ENCODE measurements at regions of chr16 and their contacts with region 1.

Region 1: DNA sequence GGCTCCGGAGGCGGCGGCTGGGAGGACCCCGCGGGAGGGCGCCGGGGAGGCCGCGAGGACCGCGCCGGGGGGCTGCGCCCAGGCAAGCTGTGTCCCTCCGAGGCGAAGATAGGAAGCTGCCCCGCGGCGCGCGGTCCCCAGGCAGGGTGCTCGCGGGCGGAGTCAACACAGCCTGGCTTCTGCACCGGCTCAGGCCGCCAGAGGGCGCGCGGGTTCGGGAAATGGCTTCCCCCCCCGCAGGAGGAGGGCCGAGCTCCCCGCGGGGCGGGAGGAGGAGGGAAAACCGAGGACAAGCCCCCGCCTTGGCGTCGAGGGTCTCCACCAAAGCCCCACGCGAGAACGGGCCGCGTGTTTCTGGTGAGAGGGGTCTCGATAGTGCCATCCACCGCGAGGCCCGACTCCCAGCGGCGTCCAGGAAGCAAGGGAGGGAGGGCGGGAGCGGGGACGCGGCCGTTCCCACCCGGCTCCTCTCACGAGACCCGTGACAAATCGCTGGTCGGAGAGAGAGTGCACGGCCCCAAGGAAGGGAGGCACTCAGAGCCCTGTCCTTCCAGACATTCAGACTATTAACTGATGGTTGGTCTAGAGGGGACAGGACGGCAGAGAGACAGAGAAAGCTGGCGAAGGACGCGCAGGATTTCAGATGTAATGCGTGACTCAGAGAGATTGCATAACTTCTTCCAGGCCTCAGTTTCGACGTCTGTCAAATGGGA is 64.4 kb upstream of the DNAJA2 start:
- DNase-seq: peak; percentile 91
- ATAC-seq: peak; percentile 97
- H3K4me3 Mint-ChIP-seq: peak overlapping the region; percentile 69
- H3K27ac Mint-ChIP-seq: no peak overlapping the region
- H3K4me1 Mint-ChIP-seq: peaks cover 3% of the 10 kb centered on the region
- H3K27me3 Mint-ChIP-seq: peaks cover 7% of the 10 kb centered on the region
- CTCF ChIP-seq: peak; percentile 96

Region 2: DNA sequence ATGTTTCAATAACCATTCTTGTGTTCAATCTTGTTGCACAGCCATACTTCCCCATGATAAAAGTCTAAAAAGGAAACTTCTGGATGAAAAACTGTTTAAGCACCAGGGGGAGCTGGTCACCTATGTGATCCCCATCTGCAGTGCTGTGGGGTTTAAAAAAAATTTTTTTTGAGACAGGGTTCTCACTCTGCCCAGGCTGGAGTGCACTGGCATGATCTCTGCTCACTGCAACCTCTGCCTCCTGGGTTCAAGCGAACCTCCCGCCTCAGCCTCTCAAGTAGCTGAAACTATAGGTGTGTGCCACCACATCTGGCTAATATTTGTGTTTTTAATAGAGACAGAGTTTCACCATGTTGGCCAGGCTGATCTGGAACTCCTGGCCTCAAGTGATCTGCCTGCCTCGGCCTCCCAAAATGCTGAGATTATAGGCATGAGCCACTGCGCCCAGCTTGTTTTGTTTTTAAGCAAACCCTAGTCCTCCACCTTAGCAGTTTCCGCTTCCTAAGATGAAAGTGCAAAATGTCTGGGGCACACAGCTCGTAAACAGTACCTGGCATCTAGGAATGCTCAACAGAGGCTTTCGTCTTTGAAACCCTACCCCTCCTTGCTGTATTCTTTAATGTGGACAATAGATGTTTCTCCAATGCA is 89.9 kb before region 1 on chr16:
- CTCF ChIA-PET with region 1: interaction called, 12 read pairs
- POLR2A ChIA-PET with region 1: interaction called, 3 read pairs
- intact Hi-C with region 1: no loop called
- DNase-seq: peak; percentile 56
- ATAC-seq: peak; percentile 70
- H3K4me3 Mint-ChIP-seq: no peak overlapping the region
- H3K27ac Mint-ChIP-seq: no peak overlapping the region
- H3K4me1 Mint-ChIP-seq: peaks cover 7% of the 10 kb centered on the region
- H3K27me3 Mint-ChIP-seq: no peaks in the 10 kb centered on the region
- CTCF ChIP-seq: peak; percentile 70

Region 3: GRCh38 chr16:46973207-46973995 is 64.5 kb before region 1 on chr16 and contains the start of gene DNAJA2:
- CTCF ChIA-PET with region 1: interaction called, 11 read pairs
- POLR2A ChIA-PET with region 1: no interaction called
- intact Hi-C with region 1: no loop called
- DNase-seq: peak; percentile 95
- ATAC-seq: peak; percentile 90
- H3K4me3 Mint-ChIP-seq: peak within 1 kb of the TSS; percentile 92
- H3K27ac Mint-ChIP-seq: peak within 1 kb of the TSS; percentile 99
- H3K4me1 Mint-ChIP-seq: peaks cover 51% of the 10 kb centered on the region
- H3K27me3 Mint-ChIP-seq: no peaks in the 10 kb centered on the region
- CTCF ChIP-seq: no peak
- total RNA-seq, gene DNAJA2: 68.4 to 70.2 TPM

Region 4: GRCh38 chr16:47018223-47018891 is 19.5 kb before region 1 on chr16:
- CTCF ChIA-PET with region 1: interaction called, 12 read pairs
- POLR2A ChIA-PET with region 1: no interaction called
- intact Hi-C with region 1: no loop called
- DNase-seq: peak; percentile 70
- ATAC-seq: peak; percentile 96
- H3K4me3 Mint-ChIP-seq: no peak overlapping the region
- H3K27ac Mint-ChIP-seq: no peak overlapping the region
- H3K4me1 Mint-ChIP-seq: peaks cover 21% of the 10 kb centered on the region
- H3K27me3 Mint-ChIP-seq: no peaks in the 10 kb centered on the region
- CTCF ChIP-seq: peak; percentile 46

Region 5: DNA sequence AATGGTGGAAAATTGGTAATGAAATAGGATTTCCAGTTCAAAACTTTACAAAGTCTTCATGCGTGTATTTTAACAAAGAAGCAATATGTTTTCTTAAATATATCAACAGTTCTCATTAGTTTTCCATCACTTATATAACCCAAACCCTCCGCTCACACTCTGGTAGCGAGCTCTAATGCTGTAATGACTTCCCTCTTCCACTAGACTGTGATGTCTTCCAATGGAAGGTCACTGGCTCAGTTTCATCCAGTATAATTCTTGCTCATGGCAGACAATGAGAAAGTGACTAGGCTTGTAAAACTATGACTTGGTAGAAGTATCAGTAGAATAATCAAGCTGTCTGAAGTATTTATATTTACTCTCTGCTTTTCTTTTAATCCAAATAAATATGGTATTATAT is 73.0 kb after region 1 on chr16:
- CTCF ChIA-PET with region 1: interaction called, 12 read pairs
- POLR2A ChIA-PET with region 1: no interaction called
- intact Hi-C with region 1: no loop called
- DNase-seq: no peak
- ATAC-seq: no peak
- H3K4me3 Mint-ChIP-seq: no peak overlapping the region
- H3K27ac Mint-ChIP-seq: no peak overlapping the region
- H3K4me1 Mint-ChIP-seq: peaks cover 13% of the 10 kb centered on the region
- H3K27me3 Mint-ChIP-seq: no peaks in the 10 kb centered on the region
- CTCF ChIP-seq: no peak

Region 6: GRCh38 chr16:48164907-48165726 is 1127.2 kb after region 1 on chr16:
- CTCF ChIA-PET with region 1: interaction called, 16 read pairs
- POLR2A ChIA-PET with region 1: no interaction called
- intact Hi-C with region 1: loop called (anchors 10 kb)
- DNase-seq: peak; percentile 73
- ATAC-seq: peak; percentile 91
- H3K4me3 Mint-ChIP-seq: no peak overlapping the region
- H3K27ac Mint-ChIP-seq: no peak overlapping the region
- H3K4me1 Mint-ChIP-seq: no peaks in the 10 kb centered on the region
- H3K27me3 Mint-ChIP-seq: peaks cover 7% of the 10 kb centered on the region
- CTCF ChIP-seq: peak; percentile 88

Measured in activated CD8-positive, alpha-beta T cell treated with anti-CD3 and anti-CD28 coated beads for 36 hours (primary cell).